ENCODE measurements at regions of chr5 and their contacts with region 1.

Region 1: DNA sequence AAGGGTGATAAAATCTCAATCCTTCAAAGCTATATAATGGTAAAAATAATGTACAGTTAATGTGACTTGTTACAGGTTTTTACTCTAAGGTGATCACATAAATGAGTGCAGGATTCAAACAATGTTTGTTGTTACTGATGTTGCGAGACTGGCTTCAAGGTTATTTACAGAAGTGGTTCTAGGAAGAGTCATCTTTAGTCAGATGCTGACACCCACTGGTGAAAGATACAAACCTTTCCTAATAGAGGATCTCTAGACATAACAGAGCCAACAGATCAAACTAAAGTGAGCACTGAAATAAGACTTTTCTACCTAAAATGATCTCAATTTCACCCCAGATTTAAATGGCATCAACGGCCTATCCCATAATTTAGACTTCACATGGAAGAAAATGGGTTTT is 20.2 kb downstream of the ARSB start:
- DNase-seq: peak; percentile 54
- ATAC-seq: peak; percentile 90
- H3K4me3 ChIP-seq: no peak overlapping the region
- H3K27ac ChIP-seq: no peak overlapping the region
- H3K4me1 ChIP-seq: no peaks in the 10 kb centered on the region
- H3K27me3 ChIP-seq: no peaks in the 10 kb centered on the region
- CTCF ChIP-seq: peak; percentile 45; the same call in 1 of the 2 replicates

Region 2: DNA sequence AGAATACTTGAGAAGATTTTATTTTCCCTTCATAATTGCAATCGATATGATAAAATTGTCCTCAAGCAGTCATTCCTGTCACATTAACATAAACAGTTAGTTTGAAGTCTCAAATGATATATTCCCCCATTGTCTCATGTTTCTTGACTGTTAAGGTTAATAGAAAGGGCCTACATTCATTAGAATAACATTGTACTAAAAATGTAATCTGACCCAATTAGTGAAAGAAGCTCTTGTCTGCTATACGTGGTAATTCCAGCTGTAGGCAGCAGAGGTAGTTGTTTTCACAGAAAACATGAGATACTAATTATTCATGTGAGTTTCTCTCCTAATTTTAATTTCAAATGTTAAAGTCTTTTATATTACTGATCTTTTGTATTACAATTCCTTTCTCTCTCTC is 644.5 kb before region 1 on chr5:
- CTCF ChIA-PET with region 1: no interaction called
- POLR2A ChIA-PET with region 1: no interaction called
- in situ Hi-C with region 1: no loop called
- intact Hi-C with region 1: loop called (anchors 5 kb)
- DNase-seq: no peak
- ATAC-seq: 0 out of 2 replicates have a peak, but pooled peaks have one; percentile 63
- H3K4me3 ChIP-seq: no peak overlapping the region
- H3K27ac ChIP-seq: no peak overlapping the region
- H3K4me1 ChIP-seq: no peaks in the 10 kb centered on the region
- H3K27me3 ChIP-seq: no peaks in the 10 kb centered on the region
- CTCF ChIP-seq: peak; percentile 71; the same call in 1 of the 2 replicates

Region 3: DNA sequence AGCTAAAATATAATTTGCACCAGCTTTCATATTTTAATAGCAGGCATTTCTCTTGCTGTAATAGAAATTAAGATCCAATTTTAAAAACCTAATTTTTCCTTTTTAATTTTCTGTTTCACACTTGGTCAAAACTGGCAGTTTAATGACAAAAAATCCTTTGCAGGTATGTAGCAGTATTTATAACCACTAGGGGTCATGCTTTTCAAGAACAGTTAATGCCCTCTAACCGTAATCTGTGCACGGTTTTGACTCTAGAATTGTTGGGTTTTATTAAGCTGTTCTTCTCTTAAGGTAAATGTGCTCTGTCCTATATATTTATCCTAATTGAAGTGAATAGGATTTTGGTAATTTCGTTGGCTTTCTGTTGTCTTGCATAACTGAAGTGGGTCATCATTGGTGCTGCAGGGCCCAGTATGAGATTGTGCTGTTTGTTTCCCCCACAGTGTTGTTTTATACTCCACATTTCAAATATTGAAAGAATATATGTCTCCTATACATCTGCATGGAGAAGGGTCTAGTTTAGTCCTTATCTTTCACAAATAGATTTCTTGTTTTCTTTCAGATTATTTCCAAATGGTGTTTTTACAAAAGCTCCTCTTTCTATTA is 497.0 kb before region 1 on chr5:
- CTCF ChIA-PET with region 1: no interaction called
- POLR2A ChIA-PET with region 1: no interaction called
- in situ Hi-C with region 1: no loop called
- intact Hi-C with region 1: loop called (anchors 5 kb)
- DNase-seq: peak; percentile 17
- ATAC-seq: peak; percentile 84
- H3K4me3 ChIP-seq: no peak overlapping the region
- H3K27ac ChIP-seq: no peak overlapping the region
- H3K4me1 ChIP-seq: no peaks in the 10 kb centered on the region
- H3K27me3 ChIP-seq: no peaks in the 10 kb centered on the region
- CTCF ChIP-seq: peak; percentile 77; the same call in 1 of the 2 replicates

Region 4: DNA sequence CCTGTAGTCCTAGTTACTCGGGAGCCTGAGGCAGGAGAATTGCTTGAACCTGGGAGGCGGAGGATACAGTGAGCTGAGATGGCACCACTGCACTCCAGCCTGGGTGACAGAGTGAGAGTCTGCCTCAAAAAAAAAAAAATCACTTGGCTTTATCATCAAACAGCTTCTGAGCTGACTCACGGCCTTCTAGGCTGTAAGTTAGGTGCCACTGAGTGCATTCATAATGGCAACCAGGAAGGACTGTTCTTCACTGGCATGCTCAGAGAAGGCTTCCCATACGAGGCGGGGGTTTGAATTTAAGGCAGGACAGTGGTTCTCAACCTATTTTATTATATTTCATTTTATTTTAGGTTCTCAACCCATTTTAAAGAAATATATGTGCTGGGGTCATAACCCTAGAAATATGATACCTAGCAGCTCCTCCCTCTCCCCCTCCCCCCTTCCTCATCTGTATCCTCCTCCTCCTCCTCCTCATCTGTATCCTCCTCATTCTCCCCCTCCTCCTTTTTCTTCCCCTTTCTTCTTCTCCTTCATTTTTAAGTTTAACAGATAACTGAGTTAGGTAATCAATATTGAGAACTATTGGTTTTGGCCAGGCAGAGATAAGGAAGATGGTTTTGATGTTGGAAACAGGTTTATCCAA is 297.3 kb before region 1 on chr5:
- CTCF ChIA-PET with region 1: interaction called, 10 read pairs
- POLR2A ChIA-PET with region 1: no interaction called
- in situ Hi-C with region 1: no loop called
- intact Hi-C with region 1: no loop called
- DNase-seq: no peak
- ATAC-seq: no peak
- H3K4me3 ChIP-seq: no peak overlapping the region
- H3K27ac ChIP-seq: no peak overlapping the region
- H3K4me1 ChIP-seq: peaks cover 4% of the 10 kb centered on the region; the same call in 1 of the 2 replicates
- H3K27me3 ChIP-seq: no peaks in the 10 kb centered on the region
- CTCF ChIP-seq: no peak

Region 5: DNA sequence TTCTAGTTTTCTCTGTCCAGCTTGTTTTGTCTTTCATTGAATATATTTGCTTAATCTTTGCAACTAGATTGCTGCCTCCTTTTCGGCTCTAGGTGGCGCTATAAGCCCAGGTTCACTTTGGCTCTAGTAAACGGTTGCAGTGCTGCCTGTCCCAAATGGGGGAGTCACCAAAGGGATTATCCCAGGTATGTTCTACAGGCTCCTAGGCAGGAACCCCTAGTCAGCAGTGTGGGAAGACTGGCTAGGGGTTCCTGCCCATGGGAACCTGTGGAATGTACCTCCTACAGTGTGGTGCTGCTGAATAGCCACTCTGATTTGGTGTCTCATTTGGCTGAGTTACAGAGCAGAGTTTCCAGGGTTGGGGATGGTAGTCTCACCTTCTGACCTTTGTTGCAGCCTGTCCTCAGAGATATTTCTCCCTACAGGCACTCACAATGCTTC is 64.9 kb before region 1 on chr5:
- CTCF ChIA-PET with region 1: no interaction called
- POLR2A ChIA-PET with region 1: no interaction called
- in situ Hi-C with region 1: no loop called
- intact Hi-C with region 1: loop called (anchors 10 kb)
- DNase-seq: no peak
- ATAC-seq: no peak
- H3K4me3 ChIP-seq: no peak overlapping the region
- H3K27ac ChIP-seq: no peak overlapping the region
- H3K4me1 ChIP-seq: no peaks in the 10 kb centered on the region
- H3K27me3 ChIP-seq: no peaks in the 10 kb centered on the region
- CTCF ChIP-seq: peak; percentile 73

Region 6: DNA sequence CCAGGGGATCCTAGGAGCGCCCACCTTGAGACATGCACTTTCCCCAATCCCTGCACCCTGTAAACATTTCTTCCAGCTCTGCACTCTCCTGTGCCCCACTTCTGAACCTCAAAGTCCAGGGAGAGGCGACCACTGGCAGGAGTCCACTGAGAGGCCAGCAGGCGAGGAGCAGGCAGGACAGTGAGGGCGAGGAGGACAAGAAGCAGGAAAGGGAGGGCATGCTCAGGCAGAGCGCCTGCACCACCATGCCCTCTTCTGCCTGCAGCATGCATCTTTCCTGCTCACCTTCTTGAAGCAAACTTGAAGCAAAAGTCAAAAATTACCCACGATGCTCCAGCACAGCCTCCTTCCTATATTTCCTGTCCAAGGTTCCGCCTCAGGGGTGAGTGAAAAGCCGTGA is 10.1 kb after region 1 on chr5:
- CTCF ChIA-PET with region 1: no interaction called
- POLR2A ChIA-PET with region 1: no interaction called
- in situ Hi-C with region 1: no loop called
- intact Hi-C with region 1: no loop called
- DNase-seq: no peak
- ATAC-seq: no peak
- H3K4me3 ChIP-seq: no peak overlapping the region
- H3K27ac ChIP-seq: no peak overlapping the region
- H3K4me1 ChIP-seq: no peaks in the 10 kb centered on the region
- H3K27me3 ChIP-seq: no peaks in the 10 kb centered on the region
- CTCF ChIP-seq: no peak

Region 7: DNA sequence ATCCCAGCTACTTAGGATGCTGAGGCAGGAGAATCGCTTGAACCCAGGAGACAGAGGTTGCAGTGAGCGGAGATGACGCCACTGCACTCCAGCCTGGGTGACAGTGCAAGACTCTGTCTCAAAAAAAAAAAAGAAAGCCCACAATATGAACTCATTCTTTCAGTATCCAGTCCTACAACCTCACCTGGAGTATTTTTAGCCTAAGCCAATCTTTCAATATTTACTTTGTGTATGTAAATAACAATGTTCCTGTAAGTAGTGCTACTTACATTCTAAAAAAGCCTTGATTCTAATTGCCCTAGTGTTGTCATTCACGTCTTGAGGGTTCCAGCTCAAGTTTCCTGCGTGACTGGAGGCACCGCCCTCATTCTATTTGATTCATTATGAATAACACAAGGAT is 208.7 kb after region 1 on chr5:
- CTCF ChIA-PET with region 1: interaction called, 13 read pairs
- POLR2A ChIA-PET with region 1: no interaction called
- in situ Hi-C with region 1: no loop called
- intact Hi-C with region 1: no loop called
- DNase-seq: no peak
- ATAC-seq: no peak
- H3K4me3 ChIP-seq: no peak overlapping the region
- H3K27ac ChIP-seq: no peak overlapping the region
- H3K4me1 ChIP-seq: no peaks in the 10 kb centered on the region
- H3K27me3 ChIP-seq: no peaks in the 10 kb centered on the region
- CTCF ChIP-seq: no peak

Region 8: DNA sequence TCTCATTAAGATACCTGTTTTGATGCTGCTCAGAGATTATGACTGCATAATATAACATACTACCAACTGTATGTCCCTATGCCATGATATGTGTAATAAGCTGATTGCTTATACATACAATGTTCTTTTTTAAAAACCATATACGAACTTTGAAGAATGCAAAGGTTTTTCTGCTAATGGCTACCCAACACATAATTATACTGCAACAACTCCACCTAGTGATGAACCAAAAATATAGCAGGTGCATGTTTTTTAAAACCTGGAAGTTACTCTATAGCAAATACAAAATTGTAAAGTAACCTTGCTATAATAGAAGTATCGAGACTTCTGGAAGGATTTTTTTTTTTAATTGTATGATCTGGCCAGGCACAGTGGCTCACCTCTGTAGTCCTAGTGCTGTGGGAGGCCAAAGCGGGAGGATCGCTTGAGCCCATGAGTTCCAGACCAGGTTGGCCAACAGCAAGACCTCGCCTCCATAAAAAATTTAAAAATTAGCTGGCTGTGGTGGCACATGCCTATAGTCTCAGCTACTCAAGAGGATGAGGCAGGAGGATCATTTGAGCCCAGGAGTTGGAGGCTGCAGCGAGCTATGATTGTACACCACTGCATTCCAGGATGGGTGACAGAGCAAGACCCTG is 499.9 kb after region 1 on chr5:
- CTCF ChIA-PET with region 1: no interaction called
- POLR2A ChIA-PET with region 1: no interaction called
- in situ Hi-C with region 1: no loop called
- intact Hi-C with region 1: no loop called
- DNase-seq: no peak
- ATAC-seq: peak; percentile 76
- H3K4me3 ChIP-seq: no peak overlapping the region
- H3K27ac ChIP-seq: no peak overlapping the region
- H3K4me1 ChIP-seq: no peaks in the 10 kb centered on the region
- H3K27me3 ChIP-seq: no peaks in the 10 kb centered on the region
- CTCF ChIP-seq: peak; percentile 69

Measured in Panc1 (cell line).